ENCODE measurements at regions of chr10 and their contacts with region 1.

Region 1: GRCh38 chr10:101161494-101162299 is 30.6 kb downstream of the TLX1 start:
- DNase-seq: peak; percentile 85
- ATAC-seq: peak; percentile 83
- H3K4me3 Mint-ChIP-seq: no peak overlapping the region
- H3K27ac Mint-ChIP-seq: no peak overlapping the region
- H3K4me1 Mint-ChIP-seq: peaks cover 10% of the 10 kb centered on the region
- H3K27me3 Mint-ChIP-seq: peaks cover 54% of the 10 kb centered on the region

Region 2: DNA sequence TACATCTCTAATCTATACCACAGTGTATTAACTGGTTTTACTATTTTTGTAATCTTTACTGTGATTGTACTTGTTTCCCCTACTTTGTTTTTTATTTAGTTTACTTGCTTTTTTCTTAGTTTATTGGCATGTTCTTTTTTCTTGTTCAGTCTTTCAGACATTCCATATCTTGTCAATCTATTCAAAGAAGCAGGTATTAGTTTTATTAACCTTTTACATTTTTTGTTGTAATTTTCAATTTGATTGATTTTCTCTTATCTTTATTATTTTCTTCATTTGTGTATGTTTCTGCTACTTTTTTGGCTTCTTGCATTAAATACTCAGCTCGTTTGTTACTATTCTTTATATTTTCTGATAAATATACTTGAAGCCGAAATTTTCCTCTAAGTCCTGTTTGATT is 11.0 kb after region 1 on chr10:
- CTCF ChIA-PET with region 1: interaction called, 24 read pairs
- POLR2A ChIA-PET with region 1: no interaction called
- intact Hi-C with region 1: no loop called
- DNase-seq: no peak
- ATAC-seq: no peak
- H3K4me3 Mint-ChIP-seq: no peak overlapping the region
- H3K27ac Mint-ChIP-seq: no peak overlapping the region
- H3K4me1 Mint-ChIP-seq: no peaks in the 10 kb centered on the region
- H3K27me3 Mint-ChIP-seq: peaks cover 40% of the 10 kb centered on the region

Region 3: DNA sequence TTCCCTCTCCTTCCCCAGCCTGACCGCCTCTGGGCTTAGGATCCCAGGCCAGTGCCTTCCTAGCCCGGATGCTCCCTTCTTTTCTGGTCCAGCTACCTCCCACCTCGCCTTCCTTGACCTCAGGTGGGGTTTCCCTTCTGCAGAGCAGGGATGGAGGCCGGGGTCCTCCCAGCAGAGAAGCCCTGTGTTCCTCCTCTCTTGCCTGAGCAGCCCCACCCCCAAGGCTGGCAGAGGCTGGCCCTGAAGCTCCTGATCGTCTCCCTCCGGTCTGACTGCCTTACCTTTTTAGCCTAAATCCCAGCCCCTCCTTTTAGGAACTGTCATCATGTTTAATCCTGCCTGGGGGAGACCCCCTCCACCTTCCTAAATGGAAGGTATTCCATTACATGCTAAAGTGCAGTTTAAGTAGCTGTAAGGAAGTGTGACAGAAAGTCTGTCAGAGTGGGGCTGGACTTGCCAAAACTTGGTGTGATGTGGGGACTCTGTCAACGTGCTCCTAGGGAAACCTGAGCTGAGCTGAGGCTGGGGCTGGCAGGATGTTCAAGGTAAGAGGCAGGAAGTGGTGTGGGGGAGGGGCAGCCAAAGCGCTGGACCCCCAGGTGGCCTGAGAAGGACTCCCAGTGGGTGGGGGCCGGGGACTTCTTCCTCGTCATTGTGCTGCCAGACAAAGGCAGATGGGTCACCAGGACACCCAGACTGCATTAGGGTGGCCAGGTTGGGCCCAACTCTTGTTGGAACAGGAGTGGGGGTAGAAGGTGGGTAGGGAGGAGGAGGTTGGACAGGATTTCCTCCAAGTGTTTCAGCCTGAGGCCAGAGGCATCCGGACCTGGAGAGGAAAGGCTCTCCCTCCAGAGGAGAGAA is 28.1 kb after region 1 on chr10:
- CTCF ChIA-PET with region 1: no interaction called
- POLR2A ChIA-PET with region 1: no interaction called
- intact Hi-C with region 1: no loop called
- DNase-seq: no peak
- ATAC-seq: no peak
- H3K4me3 Mint-ChIP-seq: no peak overlapping the region
- H3K27ac Mint-ChIP-seq: no peak overlapping the region
- H3K4me1 Mint-ChIP-seq: no peaks in the 10 kb centered on the region
- H3K27me3 Mint-ChIP-seq: peaks cover 11% of the 10 kb centered on the region

Region 4: DNA sequence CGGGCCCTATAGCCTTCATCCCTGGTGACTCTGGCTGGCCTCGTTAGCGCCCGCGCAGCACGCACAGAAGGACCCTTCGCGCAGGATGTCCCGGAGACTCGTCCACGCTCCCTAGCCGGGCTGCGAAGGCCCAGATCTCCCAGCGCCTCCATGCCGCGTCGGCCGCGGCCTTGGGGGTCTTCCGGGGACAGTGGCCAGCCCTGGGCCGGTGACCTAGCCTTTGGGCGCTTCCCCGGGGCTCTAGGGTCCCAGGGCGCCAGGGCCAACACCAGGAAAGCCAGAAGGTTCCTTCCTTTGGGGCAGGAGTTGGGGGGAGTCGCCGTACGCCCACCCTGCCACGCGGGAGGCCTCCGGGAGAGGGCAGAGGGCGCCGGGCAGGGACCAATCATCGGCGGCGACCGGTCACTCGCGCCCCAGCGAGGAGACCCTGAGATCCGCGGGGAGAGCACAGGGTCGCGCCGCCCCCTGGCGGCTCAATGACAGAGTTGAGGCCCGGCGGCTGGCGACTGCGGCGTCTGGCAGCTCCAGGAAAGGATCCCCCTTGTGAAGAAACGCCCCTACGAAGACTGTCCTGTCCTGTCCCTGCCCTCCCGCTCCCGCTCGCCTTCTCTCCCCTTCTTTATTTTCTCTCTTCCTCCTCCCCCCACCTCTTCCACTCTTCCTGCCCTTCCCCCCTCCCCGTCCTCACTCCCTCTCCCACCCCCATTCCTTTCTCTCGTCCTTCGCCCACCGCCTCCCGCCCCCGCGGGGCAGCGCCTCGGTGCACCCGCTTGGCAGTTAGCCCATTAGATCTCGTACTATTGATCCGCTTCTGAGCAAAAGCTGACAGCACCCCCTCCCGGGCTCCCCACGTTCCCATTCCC is 129.9 kb after region 1 on chr10:
- CTCF ChIA-PET with region 1: interaction called, 4 read pairs
- POLR2A ChIA-PET with region 1: no interaction called
- intact Hi-C with region 1: loop called in 1 of 2 experiments (anchors 5 kb)
- DNase-seq: peak; percentile 73
- ATAC-seq: peak; percentile 69
- H3K4me3 Mint-ChIP-seq: peak overlapping the region; percentile 59
- H3K27ac Mint-ChIP-seq: no peak overlapping the region
- H3K4me1 Mint-ChIP-seq: peaks cover 3% of the 10 kb centered on the region
- H3K27me3 Mint-ChIP-seq: peaks cover 66% of the 10 kb centered on the region

Measured in activated CD4-positive, alpha-beta T cell treated with anti-CD3 and anti-CD28 coated beads for 36 hours (primary cell).